ENCODE measurements at regions of chr12 and their contacts with region 1.

Region 1: GRCh38 chr12:113152835-113153814 is 3.6 kb downstream of the CFAP73 start:
- DNase-seq: peak; percentile 84
- ATAC-seq: peak; percentile 90

Region 2: GRCh38 chr12:113048716-113049127 is 104.4 kb before region 1 on chr12:
- intact Hi-C with region 1: loop called (anchors 10 kb)
- DNase-seq: peak; percentile 42
- ATAC-seq: peak; percentile 79